ENCODE measurements at regions of chr15 and their contacts with region 1.

Region 1: GRCh38 chr15:84716036-84716799 is at the start of gene SEC11A:
- DNase-seq: peak; percentile 95 to 97 (median 96)
- ATAC-seq: peak; percentile 95
- H3K4me3 ChIP-seq: peak within 1 kb of the TSS; percentile 81
- H3K27ac ChIP-seq: peak within 1 kb of the TSS; percentile 84
- H3K4me1 ChIP-seq: peaks cover 12 to 19% of the 10 kb centered on the region in 2 experiments; a peak in 4 of 5 replicates
- H3K27me3 ChIP-seq: no peaks in the 10 kb centered on the region
- CTCF ChIP-seq: no peak
- EP300 ChIP-seq: no peak
- POLR2A ChIP-seq: peak; percentile 90
- RAD21 ChIP-seq: no peak; a peak in 2 of 4 replicates
- polyA plus RNA-seq, gene SEC11A: 206 to 229 TPM

Region 2: DNA sequence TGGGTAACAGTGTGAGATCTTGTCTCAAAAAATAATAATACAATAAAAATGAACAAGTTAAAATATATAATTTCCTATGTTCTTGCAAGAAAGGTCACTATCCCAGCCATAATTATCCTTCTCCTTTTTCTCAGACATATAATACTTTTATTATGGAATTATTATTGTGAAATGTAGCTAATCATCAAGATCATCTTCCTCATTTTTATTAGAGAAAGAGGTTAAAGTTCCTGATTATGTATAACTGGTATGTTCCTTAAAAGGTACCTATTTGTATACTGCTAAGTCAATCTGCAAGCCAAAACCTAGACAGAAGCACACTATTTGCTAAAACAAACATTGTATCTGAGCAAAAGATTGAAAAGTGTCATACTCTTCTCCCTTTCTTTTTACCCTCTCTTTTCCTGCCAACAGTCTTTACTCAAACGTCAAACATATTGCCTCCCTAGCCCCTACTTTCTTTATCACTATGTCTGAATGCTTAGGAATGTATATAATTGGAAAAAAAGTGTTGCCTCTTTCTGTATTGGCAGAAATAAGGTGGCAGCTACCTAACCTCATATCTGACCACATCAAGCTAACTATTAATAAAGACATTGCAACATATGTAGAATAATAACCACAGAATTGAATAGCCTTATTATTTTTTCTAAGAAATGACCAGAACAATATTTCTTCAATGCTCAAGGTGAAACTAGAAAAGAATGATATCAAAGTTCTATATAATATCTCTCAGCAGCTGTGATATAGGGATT is 18.8 kb before region 1 on chr15:
- CTCF ChIA-PET with region 1: no interaction called
- POLR2A ChIA-PET with region 1: interaction called, 47 read pairs
- in situ Hi-C with region 1: no loop called
- intact Hi-C with region 1: no loop called
- DNase-seq: no peak
- ATAC-seq: no peak
- H3K4me3 ChIP-seq: no peak overlapping the region
- H3K27ac ChIP-seq: no peak overlapping the region
- H3K4me1 ChIP-seq: 0 out of 5 replicates have a peak, but pooled peaks cover 0 to 3% of the 10 kb centered on the region in 2 experiments
- H3K27me3 ChIP-seq: no peaks in the 10 kb centered on the region
- CTCF ChIP-seq: no peak
- EP300 ChIP-seq: no peak
- POLR2A ChIP-seq: no peak
- RAD21 ChIP-seq: no peak

Region 3: GRCh38 chr15:84702961-84703482 is 13.2 kb before region 1 on chr15:
- CTCF ChIA-PET with region 1: no interaction called
- POLR2A ChIA-PET with region 1: interaction called, 47 read pairs
- in situ Hi-C with region 1: no loop called
- intact Hi-C with region 1: no loop called
- DNase-seq: no peak
- ATAC-seq: peak; percentile 14
- H3K4me3 ChIP-seq: no peak overlapping the region
- H3K27ac ChIP-seq: no peak overlapping the region
- H3K4me1 ChIP-seq: no peaks in the 10 kb centered on the region
- H3K27me3 ChIP-seq: no peaks in the 10 kb centered on the region
- CTCF ChIP-seq: no peak
- EP300 ChIP-seq: no peak
- POLR2A ChIP-seq: no peak
- RAD21 ChIP-seq: no peak

Region 4: GRCh38 chr15:84734794-84735479 is 18.7 kb after region 1 on chr15:
- CTCF ChIA-PET with region 1: no interaction called
- POLR2A ChIA-PET with region 1: interaction called, 43 read pairs
- in situ Hi-C with region 1: no loop called
- intact Hi-C with region 1: no loop called
- DNase-seq: peak; percentile 80 to 94 (median 84)
- ATAC-seq: peak; percentile 98
- H3K4me3 ChIP-seq: peak overlapping the region; percentile 9; the same call in 1 of the 2 replicates
- H3K27ac ChIP-seq: peak overlapping the region; percentile 76
- H3K4me1 ChIP-seq: peaks cover 10 to 23% of the 10 kb centered on the region in 2 experiments
- H3K27me3 ChIP-seq: no peaks in the 10 kb centered on the region
- CTCF ChIP-seq: no peak
- EP300 ChIP-seq: peak; percentile 81
- POLR2A ChIP-seq: peak; percentile 81
- RAD21 ChIP-seq: peak in 1 of 2 experiments; percentile 32; a peak in 3 of 4 replicates

Region 5: GRCh38 chr15:84748274-84749110 is 32.3 kb after region 1 on chr15 and contains the start of gene ZNF592:
- CTCF ChIA-PET with region 1: no interaction called
- POLR2A ChIA-PET with region 1: interaction called, 5 read pairs
- in situ Hi-C with region 1: no loop called
- intact Hi-C with region 1: loop called (anchors 1 kb)
- DNase-seq: peak; percentile 82 to 92 (median 86)
- ATAC-seq: peak; percentile 66
- H3K4me3 ChIP-seq: peak within 1 kb of the TSS; percentile 91
- H3K27ac ChIP-seq: peak within 1 kb of the TSS; percentile 90
- H3K4me1 ChIP-seq: peaks cover 22 to 29% of the 10 kb centered on the region in 2 experiments; a peak in 4 of 5 replicates
- H3K27me3 ChIP-seq: no peaks in the 10 kb centered on the region
- CTCF ChIP-seq: peak in 2 of 3 experiments; percentile 42 to 76; a peak in 3 of 6 replicates
- EP300 ChIP-seq: no peak
- POLR2A ChIP-seq: no peak
- RAD21 ChIP-seq: peak in 1 of 2 experiments; percentile 34; a peak in 2 of 4 replicates
- polyA plus RNA-seq, gene ZNF592: 0.88 to 1.7 TPM

Region 6: DNA sequence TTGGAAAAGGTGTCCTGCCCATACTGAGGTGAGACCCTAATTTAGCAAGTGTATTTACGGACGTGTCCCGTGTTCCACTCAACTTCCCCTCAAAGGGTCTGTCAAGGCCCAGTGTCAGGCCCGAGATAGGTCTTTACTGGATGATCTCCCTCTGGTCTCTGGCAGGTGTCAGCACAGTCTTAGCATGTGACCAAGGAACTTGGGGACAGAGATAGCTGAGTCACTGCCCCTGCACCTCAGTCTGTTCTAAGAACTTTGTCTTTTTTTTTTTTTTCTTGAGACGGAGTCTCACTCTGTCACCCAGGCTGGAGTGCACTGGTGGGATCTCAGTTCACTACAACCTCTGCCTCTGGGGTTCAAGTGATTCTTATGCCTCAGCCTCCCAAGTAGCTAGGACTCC is 68.8 kb after region 1 on chr15:
- CTCF ChIA-PET with region 1: no interaction called
- POLR2A ChIA-PET with region 1: interaction called, 3 read pairs
- in situ Hi-C with region 1: no loop called
- intact Hi-C with region 1: loop called (anchors 5 kb)
- DNase-seq: peak; percentile 33 to 71 (median 52)
- ATAC-seq: peak; percentile 89
- H3K4me3 ChIP-seq: no peak overlapping the region
- H3K27ac ChIP-seq: peak overlapping the region; percentile 25; the same call in 1 of the 3 replicates
- H3K4me1 ChIP-seq: peaks cover 11 to 12% of the 10 kb centered on the region in 2 experiments; a peak in 4 of 5 replicates
- H3K27me3 ChIP-seq: no peaks in the 10 kb centered on the region
- CTCF ChIP-seq: no peak
- EP300 ChIP-seq: no peak
- POLR2A ChIP-seq: no peak
- RAD21 ChIP-seq: no peak; a peak in 1 of 4 replicates